ENCODE measurements at regions of chr12 and their contacts with region 1.

Region 1: GRCh38 chr12:111396726-111397445 is 8.8 kb upstream of the SH2B3 start:
- DNase-seq: peak; percentile 91
- ATAC-seq: peak; percentile 91
- H3K4me3 ChIP-seq: peak overlapping the region in 4 of 5 experiments; percentile 22 to 56 (median 44)
- H3K4me3 Mint-ChIP-seq: peak overlapping the region; percentile 86
- H3K27ac ChIP-seq: no peak overlapping the region
- H3K27ac Mint-ChIP-seq: peak overlapping the region; percentile 63
- H3K4me1 ChIP-seq: peaks cover 6 to 24% of the 10 kb centered on the region in 2 donors
- H3K4me1 Mint-ChIP-seq: peaks cover 28% of the 10 kb centered on the region
- H3K27me3 ChIP-seq: no peaks in the 10 kb centered on the region
- H3K27me3 Mint-ChIP-seq: no peaks in the 10 kb centered on the region
- CTCF ChIP-seq: peak; percentile 99

Region 2: DNA sequence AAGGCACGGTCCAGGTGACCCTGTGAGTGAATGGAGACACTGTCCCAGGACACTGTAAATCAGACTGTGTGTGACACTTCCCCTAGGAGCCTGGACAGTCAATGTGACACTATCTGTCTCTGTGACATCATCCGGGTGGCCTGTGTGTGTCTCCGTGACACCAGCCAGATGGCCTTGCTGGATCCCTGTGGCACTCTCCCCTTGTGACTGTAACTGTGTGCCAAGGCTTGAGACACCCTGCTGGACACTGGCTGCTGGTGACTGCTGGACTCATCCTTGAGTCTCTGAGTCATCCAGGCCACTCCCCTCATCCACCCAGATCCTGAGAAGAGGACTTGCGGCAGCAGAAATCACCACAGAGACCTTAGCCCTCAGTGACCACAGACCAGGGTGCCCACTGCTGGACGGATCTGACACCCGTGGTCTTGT is 1771.7 kb before region 1 on chr12:
- CTCF ChIA-PET with region 1: no interaction called
- POLR2A ChIA-PET with region 1: no interaction called
- intact Hi-C with region 1: no loop called
- DNase-seq: no peak
- ATAC-seq: no peak
- H3K4me3 ChIP-seq: no peak overlapping the region
- H3K4me3 Mint-ChIP-seq: no peak overlapping the region
- H3K27ac ChIP-seq: no peak overlapping the region
- H3K27ac Mint-ChIP-seq: no peak overlapping the region
- H3K4me1 ChIP-seq: no peaks in the 10 kb centered on the region
- H3K4me1 Mint-ChIP-seq: peaks cover 3% of the 10 kb centered on the region
- H3K27me3 ChIP-seq: peaks cover 0 to 18% (median 0%) of the 10 kb centered on the region in 4 experiments
- H3K27me3 Mint-ChIP-seq: peaks cover 27% of the 10 kb centered on the region
- CTCF ChIP-seq: no peak

Region 3: GRCh38 chr12:109920261-109920780 is 1476.6 kb before region 1 on chr12:
- CTCF ChIA-PET with region 1: no interaction called
- POLR2A ChIA-PET with region 1: no interaction called
- intact Hi-C with region 1: no loop called
- DNase-seq: no peak
- ATAC-seq: no peak
- H3K4me3 ChIP-seq: no peak overlapping the region
- H3K4me3 Mint-ChIP-seq: no peak overlapping the region
- H3K27ac ChIP-seq: no peak overlapping the region
- H3K27ac Mint-ChIP-seq: no peak overlapping the region
- H3K4me1 ChIP-seq: peaks cover 0 to 8% of the 10 kb centered on the region in 2 donors
- H3K4me1 Mint-ChIP-seq: peaks cover 12% of the 10 kb centered on the region
- H3K27me3 ChIP-seq: no peaks in the 10 kb centered on the region
- H3K27me3 Mint-ChIP-seq: no peaks in the 10 kb centered on the region
- CTCF ChIP-seq: no peak

Region 4: GRCh38 chr12:111330800-111331752 is 65.8 kb before region 1 on chr12:
- CTCF ChIA-PET with region 1: interaction called, 46 read pairs
- POLR2A ChIA-PET with region 1: no interaction called
- intact Hi-C with region 1: loop called (anchors 1 kb)
- DNase-seq: peak; percentile 57
- ATAC-seq: peak; percentile 45
- H3K4me3 ChIP-seq: no peak overlapping the region
- H3K4me3 Mint-ChIP-seq: no peak overlapping the region
- H3K27ac ChIP-seq: no peak overlapping the region
- H3K27ac Mint-ChIP-seq: no peak overlapping the region
- H3K4me1 ChIP-seq: peaks cover 0 to 4% of the 10 kb centered on the region in 2 donors
- H3K4me1 Mint-ChIP-seq: no peaks in the 10 kb centered on the region
- H3K27me3 ChIP-seq: peaks cover 0 to 5% (median 0%) of the 10 kb centered on the region in 4 experiments
- H3K27me3 Mint-ChIP-seq: peaks cover 8% of the 10 kb centered on the region
- CTCF ChIP-seq: peak; percentile 59

Region 5: GRCh38 chr12:111368788-111369495 is 27.9 kb before region 1 on chr12 and contains the start of gene PHETA1:
- CTCF ChIA-PET with region 1: interaction called, 24 read pairs
- POLR2A ChIA-PET with region 1: interaction called, 3 read pairs
- intact Hi-C with region 1: no loop called
- DNase-seq: peak; percentile 78
- ATAC-seq: peak; percentile 98
- H3K4me3 ChIP-seq: peak within 1 kb of the TSS; percentile 46 to 73 (median 70)
- H3K4me3 Mint-ChIP-seq: peak within 1 kb of the TSS; percentile 90
- H3K27ac ChIP-seq: peak within 1 kb of the TSS; percentile 3 to 54
- H3K27ac Mint-ChIP-seq: peak within 1 kb of the TSS; percentile 72
- H3K4me1 ChIP-seq: peaks cover 20 to 25% of the 10 kb centered on the region in 2 donors
- H3K4me1 Mint-ChIP-seq: peaks cover 35% of the 10 kb centered on the region
- H3K27me3 ChIP-seq: no peaks in the 10 kb centered on the region
- H3K27me3 Mint-ChIP-seq: no peaks in the 10 kb centered on the region
- CTCF ChIP-seq: no peak
- total RNA-seq, gene PHETA1: 9.4 and 12.1 TPM in 2 replicates

Region 6: DNA sequence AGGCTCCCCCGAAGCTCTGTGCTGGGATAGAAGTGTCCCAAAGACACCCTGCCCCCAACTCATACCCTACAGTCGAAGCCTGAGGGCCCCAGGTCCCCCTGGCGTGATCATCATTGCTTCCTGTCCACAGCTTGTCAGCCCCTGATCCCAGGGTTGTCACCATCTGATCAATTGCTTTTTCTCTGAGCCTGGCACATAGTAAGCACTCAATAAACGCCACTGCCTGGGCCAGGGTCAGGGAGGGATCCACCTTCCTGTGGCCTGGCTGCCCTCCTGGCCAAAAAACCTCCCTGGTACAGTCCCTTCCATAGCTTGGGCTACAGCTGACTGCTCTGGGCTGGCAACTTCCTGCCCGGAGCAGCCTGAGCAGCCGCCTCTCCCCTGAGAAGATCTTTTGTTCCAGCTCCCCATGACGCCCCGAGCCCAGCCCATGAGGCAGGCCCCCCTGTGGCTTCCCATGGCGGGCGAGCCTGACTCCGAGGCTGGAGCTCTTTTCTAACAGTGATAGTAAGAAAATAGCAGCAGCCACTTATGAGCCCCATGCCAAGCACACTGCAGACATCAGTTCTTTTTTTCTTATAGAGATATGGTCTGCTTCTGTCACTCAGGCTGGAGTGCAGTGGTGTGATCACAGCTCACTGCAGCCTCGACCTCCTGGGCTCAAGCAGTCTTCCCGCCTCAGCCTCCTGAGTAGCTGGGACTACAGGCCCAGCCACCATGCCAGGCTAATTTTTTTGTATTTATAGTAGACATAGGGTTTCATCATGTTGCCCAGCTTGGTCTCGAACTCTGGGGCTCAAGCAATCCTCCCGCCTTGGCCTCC is 15.3 kb after region 1 on chr12:
- CTCF ChIA-PET with region 1: interaction called, 35 read pairs
- POLR2A ChIA-PET with region 1: no interaction called
- intact Hi-C with region 1: no loop called
- DNase-seq: no peak
- ATAC-seq: no peak
- H3K4me3 ChIP-seq: no peak overlapping the region
- H3K4me3 Mint-ChIP-seq: peak overlapping the region; percentile 67
- H3K27ac ChIP-seq: peak overlapping the region; percentile 54 to 97
- H3K27ac Mint-ChIP-seq: peak overlapping the region; percentile 92
- H3K4me1 ChIP-seq: peaks cover 63 to 72% of the 10 kb centered on the region in 2 donors
- H3K4me1 Mint-ChIP-seq: peaks cover 82% of the 10 kb centered on the region
- H3K27me3 ChIP-seq: no peaks in the 10 kb centered on the region
- H3K27me3 Mint-ChIP-seq: no peaks in the 10 kb centered on the region
- CTCF ChIP-seq: no peak

Region 7: DNA sequence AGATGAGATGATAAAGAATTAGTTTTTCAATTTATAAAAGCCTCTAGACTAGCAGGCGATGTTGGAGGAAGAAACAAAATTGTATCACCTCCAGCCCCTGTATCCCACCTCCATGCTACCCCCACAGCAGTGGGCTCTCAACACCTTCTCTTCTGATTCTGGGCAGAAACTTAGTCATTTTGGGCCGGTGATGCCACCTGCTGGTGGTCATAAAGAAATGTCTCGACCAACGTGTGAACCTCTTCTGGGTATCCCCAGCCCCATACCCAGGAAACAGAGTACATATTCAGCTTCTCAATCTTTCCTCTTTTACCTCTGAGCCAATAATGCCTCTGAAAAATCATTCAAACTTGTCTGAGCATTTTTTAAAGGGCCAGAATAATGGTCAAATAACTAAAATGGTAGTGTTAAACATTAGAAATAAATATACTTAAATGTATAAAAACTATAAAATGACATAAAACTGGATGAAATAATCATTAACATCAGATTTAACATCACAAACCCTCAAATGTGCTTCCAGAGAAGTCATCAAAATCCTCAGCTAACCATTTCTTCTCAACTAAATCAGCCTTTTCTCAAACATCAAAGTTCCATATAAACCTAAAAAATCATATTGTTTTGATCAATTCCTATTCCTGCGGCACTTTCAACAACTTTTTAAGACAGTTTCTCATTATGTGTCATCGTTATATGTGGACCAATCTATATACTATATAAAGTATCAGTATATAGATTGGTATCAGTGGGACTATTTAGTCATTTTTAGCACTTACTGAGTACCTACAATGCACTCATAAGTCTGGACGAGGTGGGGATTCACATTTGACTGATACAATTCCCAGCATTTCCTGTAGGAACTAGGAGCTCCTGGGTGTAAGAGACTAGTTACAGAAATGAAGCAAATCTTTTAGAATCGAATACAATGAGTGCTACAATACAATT is 132.8 kb after region 1 on chr12:
- CTCF ChIA-PET with region 1: interaction called, 162 read pairs
- POLR2A ChIA-PET with region 1: interaction called, 3 read pairs
- intact Hi-C with region 1: no loop called
- DNase-seq: peak; percentile 78
- ATAC-seq: peak; percentile 76
- H3K4me3 ChIP-seq: no peak overlapping the region
- H3K4me3 Mint-ChIP-seq: no peak overlapping the region
- H3K27ac ChIP-seq: no peak overlapping the region
- H3K27ac Mint-ChIP-seq: no peak overlapping the region
- H3K4me1 ChIP-seq: no peaks in the 10 kb centered on the region
- H3K4me1 Mint-ChIP-seq: no peaks in the 10 kb centered on the region
- H3K27me3 ChIP-seq: no peaks in the 10 kb centered on the region
- H3K27me3 Mint-ChIP-seq: no peaks in the 10 kb centered on the region
- CTCF ChIP-seq: peak; percentile 85

Region 8: GRCh38 chr12:112183141-112184021 is 786.5 kb after region 1 on chr12:
- CTCF ChIA-PET with region 1: no interaction called
- POLR2A ChIA-PET with region 1: no interaction called
- intact Hi-C with region 1: no loop called
- DNase-seq: no peak
- ATAC-seq: no peak
- H3K4me3 ChIP-seq: no peak overlapping the region
- H3K4me3 Mint-ChIP-seq: no peak overlapping the region
- H3K27ac ChIP-seq: no peak overlapping the region
- H3K27ac Mint-ChIP-seq: no peak overlapping the region
- H3K4me1 ChIP-seq: no peaks in the 10 kb centered on the region
- H3K4me1 Mint-ChIP-seq: no peaks in the 10 kb centered on the region
- H3K27me3 ChIP-seq: no peaks in the 10 kb centered on the region
- H3K27me3 Mint-ChIP-seq: no peaks in the 10 kb centered on the region
- CTCF ChIP-seq: no peak